ENCODE measurements at regions of chr4 and their contacts with region 1.

Region 1: DNA sequence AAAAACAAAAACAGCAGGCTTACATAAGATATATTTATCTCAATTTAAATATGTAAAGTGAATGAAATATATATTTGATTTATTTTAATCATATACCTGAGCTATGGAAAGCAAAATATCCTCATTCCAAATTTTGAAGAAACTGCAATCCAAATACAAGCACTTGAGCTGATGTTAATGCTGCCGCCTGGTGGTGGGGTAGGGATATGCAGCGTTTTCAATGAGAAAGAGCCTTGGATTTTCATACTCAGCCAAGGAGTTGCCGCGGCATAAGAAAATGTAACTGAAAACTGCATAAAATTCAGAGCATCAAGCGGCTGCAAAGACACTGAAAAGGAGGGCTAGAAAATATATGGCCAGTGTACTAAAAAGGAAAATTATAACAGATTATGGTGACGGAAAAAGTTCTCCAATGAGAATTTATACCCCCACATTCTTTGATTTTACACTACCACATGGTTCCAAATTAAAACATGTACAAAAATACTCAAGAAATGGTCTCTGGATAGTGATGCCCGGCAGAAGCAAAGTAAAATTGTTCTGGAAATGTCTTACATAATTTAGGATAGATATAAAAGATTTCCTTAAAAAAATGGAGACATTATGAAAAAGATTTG is 660.3 kb upstream of the PITX2 start:
- DNase-seq: peak; percentile 39
- ATAC-seq: peak; percentile 38; the same call in 1 of the 3 replicates
- H3K4me3 ChIP-seq: no peak overlapping the region
- H3K27ac ChIP-seq: no peak overlapping the region
- H3K4me1 ChIP-seq: no peaks in the 10 kb centered on the region
- H3K27me3 ChIP-seq: no peaks in the 10 kb centered on the region
- CTCF ChIP-seq: peak; percentile 71
- EP300 ChIP-seq: no peak
- POLR2A ChIP-seq: no peak
- RAD21 ChIP-seq: no peak

Region 2: DNA sequence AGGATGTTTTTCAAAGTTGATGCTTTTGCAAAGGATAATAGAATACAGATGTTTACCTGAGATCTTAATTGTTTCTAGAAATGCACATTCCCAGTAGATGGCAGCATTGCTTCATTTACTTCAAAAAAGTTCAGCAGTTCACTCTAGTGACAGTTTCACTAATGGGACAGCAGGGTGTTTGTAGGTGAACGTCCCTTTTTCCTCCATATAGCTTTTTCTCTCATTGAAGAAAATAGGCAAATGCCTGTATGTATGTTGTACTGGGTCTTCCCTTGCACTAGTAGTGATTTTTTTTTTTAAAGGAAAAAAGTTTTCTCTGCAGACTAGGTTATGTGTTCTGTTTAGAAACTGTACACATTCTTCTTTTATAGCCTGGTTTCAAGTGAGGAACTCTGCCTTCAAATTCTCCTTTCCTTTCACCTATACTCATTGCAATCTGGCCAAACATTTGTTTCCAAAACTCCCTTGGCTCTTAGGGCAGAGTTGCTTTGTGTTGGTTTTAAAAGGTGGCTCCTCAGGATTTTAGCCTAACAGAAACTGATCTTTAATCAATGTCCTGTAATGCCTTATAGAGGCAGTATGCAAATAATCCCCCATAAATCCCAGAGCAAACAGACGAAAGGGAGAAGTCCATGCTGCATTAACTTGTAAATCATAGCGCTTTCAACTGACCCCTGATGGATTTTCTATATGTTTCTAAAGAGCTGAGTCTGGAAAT is 1284.1 kb before region 1 on chr4:
- CTCF ChIA-PET with region 1: no interaction called
- POLR2A ChIA-PET with region 1: no interaction called
- in situ Hi-C with region 1: no loop called
- intact Hi-C with region 1: loop called (anchors 2 kb)
- DNase-seq: peak; percentile 73
- ATAC-seq: peak; percentile 95
- H3K4me3 ChIP-seq: no peak overlapping the region
- H3K27ac ChIP-seq: no peak overlapping the region
- H3K4me1 ChIP-seq: peaks cover 8% of the 10 kb centered on the region; the same call in 1 of the 2 replicates
- H3K27me3 ChIP-seq: no peaks in the 10 kb centered on the region
- CTCF ChIP-seq: peak; percentile 79
- EP300 ChIP-seq: no peak
- POLR2A ChIP-seq: no peak
- RAD21 ChIP-seq: peak; percentile 72

Region 3: GRCh38 chr4:111136438-111136837 is 146.7 kb before region 1 on chr4:
- CTCF ChIA-PET with region 1: no interaction called
- POLR2A ChIA-PET with region 1: no interaction called
- in situ Hi-C with region 1: no loop called
- intact Hi-C with region 1: loop called (anchors 1 kb)
- DNase-seq: peak; percentile 7
- ATAC-seq: no peak
- H3K4me3 ChIP-seq: no peak overlapping the region
- H3K27ac ChIP-seq: no peak overlapping the region
- H3K4me1 ChIP-seq: no peaks in the 10 kb centered on the region
- H3K27me3 ChIP-seq: no peaks in the 10 kb centered on the region
- CTCF ChIP-seq: peak; percentile 38
- EP300 ChIP-seq: no peak
- POLR2A ChIP-seq: no peak
- RAD21 ChIP-seq: no peak

Region 4: GRCh38 chr4:111454961-111455360 is 171.8 kb after region 1 on chr4:
- CTCF ChIA-PET with region 1: no interaction called
- POLR2A ChIA-PET with region 1: no interaction called
- in situ Hi-C with region 1: no loop called
- intact Hi-C with region 1: no loop called
- DNase-seq: peak; percentile 45
- ATAC-seq: peak; percentile 80
- H3K4me3 ChIP-seq: no peak overlapping the region
- H3K27ac ChIP-seq: no peak overlapping the region
- H3K4me1 ChIP-seq: no peaks in the 10 kb centered on the region
- H3K27me3 ChIP-seq: no peaks in the 10 kb centered on the region
- CTCF ChIP-seq: no peak
- EP300 ChIP-seq: no peak
- POLR2A ChIP-seq: no peak
- RAD21 ChIP-seq: no peak

Region 5: DNA sequence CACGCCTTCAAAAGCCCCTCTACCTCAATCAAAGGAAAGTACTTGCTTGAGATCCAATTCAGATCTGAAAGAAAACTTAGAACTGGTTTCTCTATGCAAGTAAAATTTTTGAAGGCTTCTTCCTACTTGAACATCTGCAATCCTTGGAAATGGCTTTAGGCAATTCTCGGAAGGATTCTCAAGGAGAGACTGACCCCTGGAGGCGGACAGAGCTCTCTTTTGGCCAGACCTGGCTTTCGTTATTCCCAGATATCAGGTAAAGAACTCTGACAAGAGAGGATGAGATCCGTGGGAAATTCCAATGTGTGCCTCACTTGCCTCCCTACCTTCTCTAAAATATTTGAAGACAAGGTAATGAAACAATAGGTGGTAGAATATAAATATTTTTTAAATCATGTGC is 191.8 kb after region 1 on chr4:
- CTCF ChIA-PET with region 1: no interaction called
- POLR2A ChIA-PET with region 1: no interaction called
- in situ Hi-C with region 1: no loop called
- intact Hi-C with region 1: loop called (anchors 1 kb)
- DNase-seq: peak; percentile 17
- ATAC-seq: peak; percentile 51
- H3K4me3 ChIP-seq: no peak overlapping the region
- H3K27ac ChIP-seq: no peak overlapping the region
- H3K4me1 ChIP-seq: no peaks in the 10 kb centered on the region
- H3K27me3 ChIP-seq: no peaks in the 10 kb centered on the region
- CTCF ChIP-seq: peak; percentile 49
- EP300 ChIP-seq: no peak
- POLR2A ChIP-seq: no peak
- RAD21 ChIP-seq: no peak

Measured in HepG2 (cell line).